Heart right ventricle (tissue), 16 donors: ENCODE measurements at regions of chr12 and their contacts with region 1.

Region 1: DNA sequence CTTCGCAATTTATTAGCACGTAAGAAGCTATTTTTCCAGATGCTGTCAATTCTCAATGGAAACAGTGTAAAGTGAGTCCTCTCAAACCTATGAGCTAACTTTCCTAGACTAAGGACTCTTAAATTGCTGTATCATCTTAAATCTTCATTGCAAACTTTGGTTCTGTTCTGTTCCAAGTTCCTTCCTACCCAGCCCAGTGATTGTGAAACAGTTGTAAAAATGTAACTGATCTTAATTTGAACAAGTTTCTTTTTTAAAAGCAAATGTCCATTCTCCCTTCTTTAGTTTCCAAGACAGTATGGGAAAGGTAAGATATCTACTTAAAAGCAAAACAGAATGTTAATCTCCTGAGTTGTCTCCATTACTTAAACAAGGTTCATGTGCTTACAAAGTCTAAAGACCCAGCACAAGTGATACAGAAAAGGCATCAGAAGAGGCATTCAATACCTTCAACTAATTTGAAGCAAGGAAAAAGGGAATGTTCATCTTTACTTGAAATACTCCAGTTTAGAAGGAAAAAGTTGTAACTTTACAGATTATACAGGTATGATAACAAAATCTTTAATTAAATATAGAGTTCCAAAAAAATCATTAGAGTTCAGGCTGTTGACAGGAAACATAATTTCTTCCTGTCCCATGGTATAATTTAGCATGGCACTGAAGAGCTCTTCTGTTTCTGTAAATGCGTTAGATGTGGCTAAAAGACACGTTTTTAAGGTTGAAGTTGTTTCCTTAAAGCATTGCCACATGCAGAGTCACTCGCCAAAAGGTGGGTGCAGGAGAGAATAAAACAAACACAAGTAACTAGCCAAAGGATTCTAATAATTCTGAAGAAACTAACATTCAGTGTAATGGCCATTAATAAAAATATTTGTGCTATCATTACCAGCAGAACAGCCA is 101.5 kb upstream of the USP15 start:
- DNase-seq: no peak
- ATAC-seq: no peak
- H3K4me3 ChIP-seq: no peak overlapping the region
- H3K27ac ChIP-seq: no peak overlapping the region
- H3K4me1 ChIP-seq: peaks cover 0 to 7% (median 0%) of the 10 kb centered on the region in 9 donors
- H3K27me3 ChIP-seq: no peaks in the 10 kb centered on the region
- CTCF ChIP-seq: no peak

Region 2: DNA sequence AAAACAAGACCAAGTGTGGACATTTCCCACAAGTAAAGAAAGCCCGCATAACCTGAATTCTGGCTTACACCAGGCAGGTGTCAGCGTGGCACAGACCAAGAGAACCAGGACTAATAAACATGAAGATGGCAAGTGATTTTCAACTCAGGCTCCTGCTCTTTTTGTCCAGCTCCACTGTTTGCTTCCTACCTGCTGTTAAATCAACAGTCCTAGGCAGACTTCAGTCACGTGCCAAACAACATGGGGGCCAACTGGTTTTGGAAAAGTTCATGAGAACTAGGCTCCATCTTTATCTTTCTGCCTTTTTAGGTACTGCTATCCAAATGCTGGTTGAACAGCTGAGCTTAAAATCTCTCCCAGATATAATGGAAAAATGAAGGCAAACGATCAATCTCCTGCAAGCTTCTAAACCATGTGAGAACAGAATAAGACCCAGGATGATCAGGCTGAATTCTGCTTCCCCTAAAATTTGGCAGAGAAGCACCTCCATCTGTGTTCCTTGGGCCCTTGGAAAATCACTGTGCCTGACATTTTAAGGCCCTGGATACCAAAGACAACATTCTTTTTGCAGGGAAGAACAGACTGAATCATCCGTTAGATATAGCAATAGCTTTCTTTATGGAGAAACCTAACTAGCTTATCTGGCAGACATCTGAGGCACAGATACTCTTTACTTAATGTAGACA is 114.1 kb before region 1 on chr12:
- intact Hi-C with region 1: loop called in 1 of 10 experiments (anchors 5 kb)
- DNase-seq: no peak
- ATAC-seq: peak in 1 of 8 donors; percentile 29
- H3K4me3 ChIP-seq: no peak overlapping the region
- H3K27ac ChIP-seq: no peak overlapping the region
- H3K4me1 ChIP-seq: no peaks in the 10 kb centered on the region
- H3K27me3 ChIP-seq: no peaks in the 10 kb centered on the region
- CTCF ChIP-seq: no peak